Breast epithelium (tissue), 4 donors: ENCODE measurements at regions of chr3 and their contacts with region 1.

Region 1: DNA sequence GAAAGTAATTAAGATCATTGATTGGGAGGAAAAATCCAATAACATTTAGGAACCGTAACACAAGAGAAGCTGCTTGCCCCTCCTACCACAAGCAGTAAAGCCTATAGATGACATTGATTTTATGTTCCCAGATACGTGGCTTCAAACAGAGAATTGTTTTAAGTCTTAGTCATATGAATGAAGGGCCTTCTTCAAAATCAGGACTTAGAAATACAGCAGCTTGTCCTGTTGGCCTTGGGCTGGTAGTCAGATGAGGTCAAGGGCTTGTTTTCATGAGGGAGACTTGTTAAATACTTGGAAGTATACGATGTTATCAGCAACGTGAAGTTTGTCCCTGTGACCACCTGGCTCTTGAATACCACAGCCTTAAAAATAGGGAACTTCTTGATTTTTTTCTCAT is 114.4 kb downstream of the VGLL4 start:
- DNase-seq: no peak
- H3K4me3 ChIP-seq: no peak overlapping the region
- H3K27ac ChIP-seq: peak overlapping the region; percentile 21 to 49
- H3K4me1 ChIP-seq: peaks cover 0 to 6% of the 10 kb centered on the region in 2 donors
- H3K27me3 ChIP-seq: no peaks in the 10 kb centered on the region
- CTCF ChIP-seq: no peak
- POLR2A ChIP-seq: no peak

Region 2: GRCh38 chr3:12954891-12955650 is 1425.8 kb after region 1 on chr3:
- intact Hi-C with region 1: loop called (anchors 5 kb)
- DNase-seq: peak; percentile 72 to 76
- H3K4me3 ChIP-seq: peak overlapping the region in 1 of 3 donors; percentile 22
- H3K27ac ChIP-seq: peak overlapping the region; percentile 62 to 74
- H3K4me1 ChIP-seq: peaks cover 4 to 12% of the 10 kb centered on the region in 2 donors
- H3K27me3 ChIP-seq: no peaks in the 10 kb centered on the region
- CTCF ChIP-seq: no peak
- POLR2A ChIP-seq: no peak